ENCODE measurements at regions of chr12 and their contacts with region 1.

Region 1: DNA sequence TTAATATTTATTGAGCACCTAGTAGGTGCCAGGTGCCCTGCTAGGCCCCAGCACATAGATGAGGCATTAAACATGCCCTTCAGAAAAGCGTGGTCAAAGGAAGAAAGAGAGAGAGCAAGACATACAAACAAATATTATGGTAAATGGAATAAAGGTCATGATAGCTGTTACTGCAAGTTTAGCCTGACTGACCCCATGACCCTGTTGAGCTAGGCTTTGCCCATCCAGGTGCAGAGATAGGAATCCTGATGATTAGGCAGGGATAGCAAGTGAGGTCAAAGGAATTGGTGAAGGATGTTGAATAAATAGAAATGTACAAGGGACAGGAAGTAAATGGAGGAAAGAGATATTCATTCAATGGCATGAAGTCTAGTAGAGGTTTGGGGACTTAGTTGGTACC is 33.4 kb upstream of the SLC15A5 start:
- DNase-seq: no peak
- H3K4me3 ChIP-seq: no peak overlapping the region
- CTCF ChIP-seq: no peak
- POLR2A ChIP-seq: no peak

Region 2: DNA sequence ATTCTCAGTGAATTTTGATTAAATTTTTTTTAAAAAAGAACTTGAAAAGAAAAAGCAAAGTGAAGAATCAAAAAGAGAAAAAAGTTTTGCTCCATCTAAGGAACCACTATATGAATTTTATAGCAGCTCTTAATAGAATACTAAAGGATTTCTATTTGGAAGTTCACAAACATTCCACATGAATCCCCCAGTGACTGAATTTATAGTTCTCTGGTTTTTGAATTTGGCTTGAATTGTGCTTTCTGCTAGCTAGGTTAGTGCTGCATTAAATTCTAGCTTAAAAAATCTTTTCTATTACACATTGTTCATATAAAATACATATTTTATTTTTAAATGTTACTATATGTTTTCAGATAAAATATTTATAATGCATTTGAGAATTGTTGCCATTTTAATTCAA is 1103.7 kb after region 1 on chr12:
- intact Hi-C with region 1: loop called (anchors 10 kb)
- DNase-seq: no peak
- H3K4me3 ChIP-seq: no peak overlapping the region
- CTCF ChIP-seq: no peak
- POLR2A ChIP-seq: no peak